Stomach (tissue), 19 donors: ENCODE measurements at regions of chr2 and their contacts with region 1.

Region 1: GRCh38 chr2:237572021-237572741 is 5.8 kb downstream of the PRLH start:
- DNase-seq: peak; percentile 92 to 96
- H3K4me3 ChIP-seq: no peak overlapping the region
- H3K27ac ChIP-seq: peak overlapping the region in 1 of 5 donors; percentile 0
- H3K4me1 ChIP-seq: peaks cover 21 to 38% (median 29%) of the 10 kb centered on the region in 4 donors
- H3K27me3 ChIP-seq: peaks cover 0 to 4% (median 0%) of the 10 kb centered on the region in 3 donors
- CTCF ChIP-seq: peak in 5 of 7 experiments; percentile 94 to 98 (median 97)
- EP300 ChIP-seq: no peak
- POLR2A ChIP-seq: no peak

Region 2: DNA sequence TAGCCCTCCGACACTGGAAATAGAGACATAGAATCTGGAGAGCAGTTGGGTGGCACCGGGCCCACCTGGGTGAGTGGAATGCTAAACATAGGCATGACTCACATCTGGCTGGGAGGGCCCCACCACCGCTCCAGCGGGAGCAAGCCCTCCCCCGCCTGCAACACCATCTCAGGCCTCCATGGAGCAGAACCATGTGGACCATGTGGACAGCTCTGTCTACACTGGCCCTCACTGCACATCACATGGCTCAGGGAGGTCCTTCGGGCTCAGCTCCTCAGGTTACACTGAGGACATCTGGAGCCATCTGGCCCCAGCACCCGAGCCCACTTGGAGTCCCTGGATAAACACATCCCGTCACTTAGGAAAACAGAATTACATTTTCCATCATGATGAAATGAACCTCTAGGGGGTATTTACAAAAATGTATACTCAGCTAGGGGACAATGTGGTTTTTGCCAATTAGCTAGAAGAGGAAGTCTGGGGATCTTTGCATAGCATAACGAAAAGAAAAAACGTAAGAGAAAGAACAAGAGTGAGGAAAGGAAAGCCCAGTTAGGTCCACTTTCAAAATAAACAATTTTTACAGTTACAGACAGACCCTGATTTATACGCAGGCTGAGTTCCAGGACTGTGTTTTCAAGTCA is 115.9 kb before region 1 on chr2:
- intact Hi-C with region 1: no loop called
- DNase-seq: peak in 1 of 2 donors; percentile 84
- H3K4me3 ChIP-seq: no peak overlapping the region
- H3K27ac ChIP-seq: no peak overlapping the region
- H3K4me1 ChIP-seq: peaks cover 0 to 11% (median 0%) of the 10 kb centered on the region in 4 donors
- H3K27me3 ChIP-seq: peaks cover 0 to 11% (median 0%) of the 10 kb centered on the region in 3 donors
- CTCF ChIP-seq: no peak
- EP300 ChIP-seq: no peak
- POLR2A ChIP-seq: no peak

Region 3: DNA sequence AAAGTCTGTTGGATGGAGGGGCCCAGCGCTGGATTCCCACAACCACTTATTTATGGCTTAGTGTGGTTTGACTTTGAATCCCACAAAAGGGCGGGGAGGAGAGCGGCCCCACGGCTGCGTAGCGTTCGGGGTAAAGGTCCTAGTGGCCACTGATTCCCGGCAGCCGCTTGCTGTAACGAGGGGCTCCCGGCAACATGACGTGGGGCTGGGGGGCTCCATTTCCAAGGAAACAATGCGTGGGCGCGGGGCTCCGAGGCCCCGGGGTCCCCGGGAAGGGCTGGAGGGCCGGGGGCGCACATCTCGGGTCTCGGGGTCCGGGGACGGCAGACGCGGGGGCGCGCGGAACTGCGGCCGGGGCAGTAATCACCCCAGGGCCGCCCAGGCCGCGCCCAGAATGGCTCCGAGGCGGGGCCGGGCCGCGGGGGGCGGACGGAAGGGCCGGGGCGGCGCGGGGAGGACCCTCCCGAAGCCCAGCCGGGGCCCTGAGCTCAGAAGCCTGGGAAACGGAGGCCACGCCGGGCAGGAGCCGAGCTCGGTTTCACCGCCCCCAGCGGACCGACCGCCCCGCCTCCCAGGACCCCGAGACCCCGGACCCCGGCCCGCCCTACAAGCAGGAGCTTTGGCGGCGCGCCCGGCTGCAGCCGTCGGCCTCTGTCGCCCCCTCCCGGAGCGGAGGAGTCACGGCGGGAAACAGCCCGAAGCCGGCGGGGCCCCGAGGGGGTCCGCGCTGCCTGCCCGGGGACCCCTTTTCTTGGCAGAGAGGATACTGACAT is 97.1 kb before region 1 on chr2:
- intact Hi-C with region 1: loop called (anchors 5 kb)
- DNase-seq: peak; percentile 88 to 95
- H3K4me3 ChIP-seq: peak overlapping the region; percentile 58 to 82 (median 68)
- H3K27ac ChIP-seq: peak overlapping the region; percentile 89 to 97 (median 92)
- H3K4me1 ChIP-seq: peaks cover 15 to 49% (median 39%) of the 10 kb centered on the region in 4 donors
- H3K27me3 ChIP-seq: no peaks in the 10 kb centered on the region
- CTCF ChIP-seq: peak in 5 of 7 experiments; percentile 59 to 98 (median 80)
- EP300 ChIP-seq: no peak
- POLR2A ChIP-seq: no peak

Region 4: GRCh38 chr2:237512774-237513466 is 59.3 kb before region 1 on chr2:
- intact Hi-C with region 1: loop called (anchors 5 kb)
- DNase-seq: peak; percentile 90 to 96
- H3K4me3 ChIP-seq: no peak overlapping the region
- H3K27ac ChIP-seq: peak overlapping the region; percentile 23 to 94 (median 64)
- H3K4me1 ChIP-seq: peaks cover 51 to 66% (median 56%) of the 10 kb centered on the region in 4 donors
- H3K27me3 ChIP-seq: no peaks in the 10 kb centered on the region
- CTCF ChIP-seq: peak in 6 of 7 experiments; percentile 59 to 93 (median 82)
- EP300 ChIP-seq: no peak
- POLR2A ChIP-seq: no peak